ENCODE measurements at regions of chr16 and their contacts with region 1.

Region 1: GRCh38 chr16:2009789-2010510 is at the start of gene ZNF598:
- DNase-seq: peak; percentile 52 to 82
- H3K4me3 ChIP-seq: peak within 1 kb of the TSS; percentile 88
- H3K27ac ChIP-seq: peak within 1 kb of the TSS; percentile 86
- H3K4me1 ChIP-seq: peaks cover 27% of the 10 kb centered on the region
- H3K27me3 ChIP-seq: no peaks in the 10 kb centered on the region
- CTCF ChIP-seq: no peak
- total RNA-seq, gene ZNF598: 68.4 and 72.5 TPM in 2 replicates

Region 2: GRCh38 chr16:1983544-1984346 is 26.2 kb before region 1 on chr16 and contains the start of gene GFER:
- CTCF ChIA-PET with region 1: no interaction called
- POLR2A ChIA-PET with region 1: interaction called, 3 read pairs
- intact Hi-C with region 1: loop called (anchors 2 kb)
- DNase-seq: peak; percentile 73 to 98
- H3K4me3 ChIP-seq: peak within 1 kb of the TSS; percentile 93
- H3K27ac ChIP-seq: no peak within 1 kb of the TSS
- H3K4me1 ChIP-seq: peaks cover 67% of the 10 kb centered on the region
- H3K27me3 ChIP-seq: no peaks in the 10 kb centered on the region
- CTCF ChIP-seq: no peak; the same call in 1 of the 2 replicates
- total RNA-seq, gene GFER: 59.7 and 63.8 TPM in 2 replicates

Region 3: GRCh38 chr16:2028146-2028545 is 18.2 kb after region 1 on chr16:
- CTCF ChIA-PET with region 1: no interaction called
- POLR2A ChIA-PET with region 1: no interaction called
- intact Hi-C with region 1: no loop called
- DNase-seq: no peak
- H3K4me3 ChIP-seq: no peak overlapping the region
- H3K27ac ChIP-seq: no peak overlapping the region
- H3K4me1 ChIP-seq: peaks cover 13% of the 10 kb centered on the region
- H3K27me3 ChIP-seq: no peaks in the 10 kb centered on the region
- CTCF ChIP-seq: no peak

Region 4: GRCh38 chr16:2040787-2041522 is 31.0 kb after region 1 on chr16:
- CTCF ChIA-PET with region 1: interaction called, 18 read pairs
- POLR2A ChIA-PET with region 1: interaction called, 3 read pairs
- intact Hi-C with region 1: no loop called
- DNase-seq: peak; percentile 94 to 96
- H3K4me3 ChIP-seq: no peak overlapping the region
- H3K27ac ChIP-seq: peak overlapping the region; percentile 95
- H3K4me1 ChIP-seq: peaks cover 45% of the 10 kb centered on the region
- H3K27me3 ChIP-seq: no peaks in the 10 kb centered on the region
- CTCF ChIP-seq: no peak

Region 5: GRCh38 chr16:2371421-2371820 is 361.5 kb after region 1 on chr16:
- CTCF ChIA-PET with region 1: no interaction called
- POLR2A ChIA-PET with region 1: no interaction called
- intact Hi-C with region 1: no loop called
- DNase-seq: no peak
- H3K4me3 ChIP-seq: no peak overlapping the region
- H3K27ac ChIP-seq: no peak overlapping the region
- H3K4me1 ChIP-seq: peaks cover 7% of the 10 kb centered on the region; the same call in 1 of the 2 replicates
- H3K27me3 ChIP-seq: peaks cover 25% of the 10 kb centered on the region
- CTCF ChIP-seq: no peak